Common myeloid progenitor, CD34-positive (primary cell): ENCODE measurements at regions of chr1 and their contacts with region 1.

Region 1: GRCh38 chr1:209342441-209343175 is 240.9 kb upstream of the CAMK1G start:
- DNase-seq: no peak
- H3K4me3 ChIP-seq: no peak overlapping the region
- H3K27ac ChIP-seq: no peak overlapping the region
- H3K4me1 ChIP-seq: no peaks in the 10 kb centered on the region
- H3K27me3 ChIP-seq: peaks cover 0 to 4% (median 0%) of the 10 kb centered on the region in 5 experiments

Region 2: DNA sequence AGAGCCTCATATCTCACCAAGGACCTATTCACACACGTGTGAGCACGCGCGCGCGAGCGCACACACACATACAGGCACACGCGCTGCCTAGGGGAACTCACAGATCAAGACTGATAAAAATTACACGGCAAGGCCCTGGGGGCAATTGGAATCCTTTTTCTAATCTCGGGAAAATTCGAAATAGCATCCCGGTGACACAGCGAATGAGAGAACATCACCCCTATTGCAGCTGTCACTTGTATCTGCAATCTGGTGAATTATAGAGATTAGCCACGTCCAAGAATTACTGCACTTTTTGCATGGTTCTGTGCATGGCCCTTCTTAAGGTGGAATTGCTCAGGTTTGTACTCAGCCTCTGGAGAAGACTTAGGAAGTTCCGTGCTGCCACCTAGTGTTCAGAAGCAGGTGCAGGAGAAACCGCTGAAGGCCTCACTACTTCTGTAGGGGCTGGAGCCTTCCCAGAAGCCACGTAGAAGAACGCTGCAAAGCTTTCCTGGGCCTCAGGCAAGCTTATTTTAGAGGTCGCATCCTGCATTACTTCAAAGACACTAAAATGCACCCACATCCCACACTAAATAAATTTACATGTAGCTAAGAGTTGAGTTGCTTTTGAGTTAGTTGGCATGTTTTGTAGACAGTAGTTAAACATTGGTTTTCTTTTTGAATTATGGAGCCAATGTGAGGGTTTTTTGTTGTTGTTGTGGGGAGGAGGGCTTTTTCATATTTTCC is 11.7 kb after region 1 on chr1:
- CTCF ChIA-PET with region 1: interaction called, 23 read pairs
- POLR2A ChIA-PET with region 1: no interaction called
- DNase-seq: peak; percentile 78 to 90 (median 88)
- H3K4me3 ChIP-seq: no peak overlapping the region
- H3K27ac ChIP-seq: no peak overlapping the region
- H3K4me1 ChIP-seq: peaks cover 0 to 4% (median 0%) of the 10 kb centered on the region in 4 experiments
- H3K27me3 ChIP-seq: peaks cover 0 to 5% (median 0%) of the 10 kb centered on the region in 5 experiments

Region 3: GRCh38 chr1:209398313-209398991 is 55.8 kb after region 1 on chr1:
- CTCF ChIA-PET with region 1: no interaction called
- POLR2A ChIA-PET with region 1: no interaction called
- DNase-seq: peak; percentile 85 to 99 (median 97)
- H3K4me3 ChIP-seq: peak overlapping the region in 1 of 7 experiments; percentile 29
- H3K27ac ChIP-seq: peak overlapping the region; percentile 90 to 93
- H3K4me1 ChIP-seq: peaks cover 6 to 52% (median 33%) of the 10 kb centered on the region in 4 experiments
- H3K27me3 ChIP-seq: no peaks in the 10 kb centered on the region